Right cardiac atrium (tissue), 5 donors: ENCODE measurements at regions of chr4 and their contacts with region 1.

Region 1: DNA sequence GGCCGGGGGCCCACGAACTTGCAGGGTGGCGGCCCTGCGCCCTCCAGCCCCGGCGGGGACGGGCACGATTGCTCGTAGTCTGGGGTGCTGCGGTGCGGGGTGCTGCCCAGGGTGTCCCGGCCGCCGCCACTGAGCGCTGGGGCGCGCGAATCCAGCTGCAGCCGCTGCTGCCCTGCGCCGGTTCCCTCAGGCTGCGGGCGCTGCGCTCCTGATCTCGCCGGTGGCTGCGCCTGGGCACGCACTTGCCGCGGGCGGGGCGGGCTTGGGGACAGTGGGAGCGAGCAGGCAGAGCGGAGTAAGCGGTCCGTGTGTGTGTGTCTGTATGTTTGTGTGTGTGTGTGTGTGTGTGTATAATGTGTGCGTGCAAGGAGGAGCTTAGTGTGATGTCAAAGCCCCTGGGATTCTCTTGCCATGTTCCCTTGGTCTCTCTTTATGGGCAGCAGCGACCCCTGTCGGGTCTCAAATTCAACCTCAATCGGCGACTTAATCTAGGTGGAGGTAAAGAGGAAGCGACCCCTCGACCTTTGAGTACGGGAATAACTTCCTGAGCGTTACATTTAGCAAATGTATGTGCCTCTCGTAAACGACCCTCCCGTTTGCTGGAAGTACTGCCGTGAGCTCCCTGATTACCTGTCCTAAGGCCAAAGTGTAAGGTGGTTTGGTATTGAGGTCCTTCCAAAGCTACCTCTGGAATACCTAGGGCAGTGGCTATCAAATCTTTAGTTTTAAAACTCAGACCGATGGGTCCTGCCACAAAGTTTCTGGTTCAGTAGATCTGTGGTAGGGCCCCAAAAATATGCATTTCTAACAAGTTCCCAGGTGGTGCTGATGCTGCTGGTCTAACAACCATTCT is at the start of gene RNF150:
- DNase-seq: peak; percentile 64 to 88 (median 87)
- ATAC-seq: peak; percentile 89 to 90
- H3K4me3 ChIP-seq: peak within 1 kb of the TSS; percentile 89
- H3K27ac ChIP-seq: peak within 1 kb of the TSS; percentile 90
- H3K4me1 ChIP-seq: no peaks in the 10 kb centered on the region
- H3K27me3 ChIP-seq: no peaks in the 10 kb centered on the region
- total RNA-seq, gene RNF150: 32.8 to 51.3 (median 40.3) TPM

Region 2: DNA sequence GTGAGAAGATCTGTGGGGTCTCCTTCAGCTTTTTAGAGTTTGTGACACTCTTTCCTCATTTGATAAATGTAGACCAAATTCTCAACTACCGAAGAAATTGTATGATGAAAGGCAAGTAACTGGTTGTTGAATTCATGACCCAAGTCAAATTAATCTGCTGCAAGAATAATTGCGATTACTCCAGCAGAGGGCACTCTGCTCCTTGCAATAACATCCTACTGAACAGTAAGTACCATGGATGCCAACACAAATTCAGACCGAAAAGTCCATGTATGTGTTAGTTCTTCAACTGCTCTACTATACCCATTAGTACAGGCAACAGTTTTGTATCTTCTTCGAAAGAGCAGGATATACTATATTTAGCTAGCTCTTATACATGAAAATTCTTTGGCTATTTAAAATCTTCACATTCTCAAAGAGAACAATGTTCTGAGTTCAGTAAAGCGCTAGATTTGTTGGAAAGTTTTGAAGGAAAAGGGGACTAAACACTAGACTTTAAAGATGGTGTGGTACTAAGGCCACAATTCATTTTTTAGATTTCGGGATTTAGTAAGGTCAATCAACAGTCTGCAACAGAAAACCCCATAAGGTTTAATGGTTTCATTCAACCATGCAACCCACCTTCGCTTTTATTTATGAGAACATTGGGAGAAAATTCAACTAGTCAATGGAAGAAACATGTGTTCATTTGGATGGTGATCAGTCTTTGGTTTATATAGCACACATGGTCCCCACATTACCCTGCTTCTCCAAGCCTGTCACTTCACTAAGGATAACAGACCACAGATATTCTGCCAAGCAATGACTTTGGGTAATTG is 271.8 kb before region 1 on chr4:
- intact Hi-C with region 1: loop called (anchors 2 to 5 kb)
- DNase-seq: peak in 2 of 3 donors; percentile 26 to 61
- ATAC-seq: peak; percentile 68 to 76
- H3K4me3 ChIP-seq: no peak overlapping the region
- H3K27ac ChIP-seq: no peak overlapping the region
- H3K4me1 ChIP-seq: no peaks in the 10 kb centered on the region
- H3K27me3 ChIP-seq: no peaks in the 10 kb centered on the region

Region 3: GRCh38 chr4:140874056-140874455 is 259.3 kb before region 1 on chr4:
- intact Hi-C with region 1: no loop called
- DNase-seq: no peak
- ATAC-seq: no peak
- H3K4me3 ChIP-seq: no peak overlapping the region
- H3K27ac ChIP-seq: no peak overlapping the region
- H3K4me1 ChIP-seq: no peaks in the 10 kb centered on the region
- H3K27me3 ChIP-seq: no peaks in the 10 kb centered on the region

Region 4: GRCh38 chr4:140884431-140885058 is 248.8 kb before region 1 on chr4:
- intact Hi-C with region 1: loop called in 2 of 4 experiments (anchors 5 kb)
- DNase-seq: peak in 2 of 3 donors; percentile 35 to 44
- ATAC-seq: peak; percentile 76 to 78
- H3K4me3 ChIP-seq: no peak overlapping the region
- H3K27ac ChIP-seq: no peak overlapping the region
- H3K4me1 ChIP-seq: no peaks in the 10 kb centered on the region
- H3K27me3 ChIP-seq: no peaks in the 10 kb centered on the region

Region 5: GRCh38 chr4:140996766-140997165 is 136.6 kb before region 1 on chr4:
- intact Hi-C with region 1: loop called in 2 of 4 experiments (anchors 5 to 10 kb)
- DNase-seq: no peak
- ATAC-seq: no peak
- H3K4me3 ChIP-seq: no peak overlapping the region
- H3K27ac ChIP-seq: no peak overlapping the region
- H3K4me1 ChIP-seq: peaks cover 3% of the 10 kb centered on the region
- H3K27me3 ChIP-seq: no peaks in the 10 kb centered on the region

Region 6: DNA sequence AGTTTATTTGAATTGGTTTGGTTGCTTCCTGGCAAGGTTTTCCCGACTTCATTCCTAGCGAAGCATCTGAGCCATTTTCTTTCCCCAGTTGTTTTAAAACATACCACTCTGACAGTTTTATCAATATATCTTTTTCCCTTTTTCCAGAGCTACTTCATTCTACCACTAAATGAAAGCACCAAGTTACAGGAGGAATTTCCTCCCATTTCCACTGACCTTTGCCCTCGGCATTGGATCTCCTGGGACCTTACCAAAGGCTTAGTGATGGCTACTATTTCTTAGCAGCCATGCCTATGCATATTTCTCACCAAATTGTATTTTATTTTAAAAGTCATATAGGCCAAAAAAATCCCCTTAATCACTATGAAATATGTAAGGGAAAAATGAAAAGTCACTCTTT is 237.8 kb after region 1 on chr4:
- intact Hi-C with region 1: no loop called
- DNase-seq: no peak
- ATAC-seq: no peak
- H3K4me3 ChIP-seq: no peak overlapping the region
- H3K27ac ChIP-seq: no peak overlapping the region
- H3K4me1 ChIP-seq: no peaks in the 10 kb centered on the region
- H3K27me3 ChIP-seq: no peaks in the 10 kb centered on the region